ENCODE measurements at regions of chr4 and their contacts with region 1.

Region 1: GRCh38 chr4:107989537-107990386 is at the start of gene HADH:
- DNase-seq: peak; percentile 95
- ATAC-seq: peak; percentile 98
- H3K4me3 ChIP-seq: peak within 1 kb of the TSS; percentile 65 to 87 (median 71)
- H3K4me3 Mint-ChIP-seq: peak within 1 kb of the TSS; percentile 81
- H3K27ac ChIP-seq: peak within 1 kb of the TSS; percentile 38 to 82
- H3K27ac Mint-ChIP-seq: peak within 1 kb of the TSS; percentile 82
- H3K4me1 ChIP-seq: peaks cover 33 to 46% of the 10 kb centered on the region in 2 donors
- H3K4me1 Mint-ChIP-seq: peaks cover 48% of the 10 kb centered on the region
- H3K27me3 ChIP-seq: no peaks in the 10 kb centered on the region
- H3K27me3 Mint-ChIP-seq: no peaks in the 10 kb centered on the region
- CTCF ChIP-seq: no peak
- total RNA-seq, gene HADH: 26.1 and 26.4 TPM in 2 replicates

Region 2: DNA sequence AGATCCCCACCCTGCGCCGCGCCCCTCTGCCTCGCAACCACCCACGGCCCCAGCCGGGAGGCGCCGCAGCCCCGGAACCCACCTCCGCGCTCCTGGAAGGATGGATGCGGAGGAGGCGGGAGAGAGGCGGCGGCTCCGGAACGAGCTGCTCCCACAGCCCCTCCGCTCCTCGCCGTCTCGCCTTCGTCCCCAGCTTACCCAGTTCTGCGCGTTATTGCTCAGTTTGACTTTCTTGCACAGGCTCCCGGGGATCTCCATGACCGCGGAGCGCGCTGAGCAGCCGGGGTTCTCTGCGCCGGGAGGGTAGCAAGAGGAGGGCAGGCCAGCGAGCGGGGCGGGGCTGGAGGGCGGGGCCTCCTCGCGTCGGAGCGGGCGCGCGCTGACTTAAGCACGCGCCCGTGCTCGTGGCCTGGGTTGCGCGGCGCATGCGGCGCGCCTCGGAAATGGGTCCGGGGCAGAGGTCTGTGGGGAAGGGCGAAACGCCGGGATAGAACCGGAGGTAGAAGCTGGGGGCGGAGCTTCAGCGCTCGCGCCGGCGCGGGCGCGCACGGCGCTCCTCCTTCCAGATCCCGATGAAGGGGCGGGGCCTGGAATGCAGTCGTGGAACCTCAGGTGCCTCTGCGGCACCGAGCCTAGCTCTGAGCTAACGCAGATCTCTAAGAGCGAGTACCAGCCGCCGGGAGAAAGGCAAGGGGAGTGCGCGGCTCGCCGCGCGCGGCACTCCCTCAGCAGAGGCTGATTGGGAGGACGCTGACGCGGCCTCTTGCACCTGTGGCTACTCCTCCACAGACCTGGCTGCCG is 269.6 kb before region 1 on chr4 and contains the start of gene PAPSS1:
- CTCF ChIA-PET with region 1: interaction called, 4 read pairs
- POLR2A ChIA-PET with region 1: no interaction called
- intact Hi-C with region 1: loop called (anchors 1 kb)
- DNase-seq: peak; percentile 99
- ATAC-seq: peak; percentile 85
- H3K4me3 ChIP-seq: peak within 1 kb of the TSS; percentile 68 to 93 (median 90)
- H3K4me3 Mint-ChIP-seq: peak within 1 kb of the TSS; percentile 99
- H3K27ac ChIP-seq: peak within 1 kb of the TSS; percentile 50 to 75
- H3K27ac Mint-ChIP-seq: peak within 1 kb of the TSS; percentile 97
- H3K4me1 ChIP-seq: peaks cover 22 to 26% of the 10 kb centered on the region in 2 donors
- H3K4me1 Mint-ChIP-seq: peaks cover 39% of the 10 kb centered on the region
- H3K27me3 ChIP-seq: no peaks in the 10 kb centered on the region
- H3K27me3 Mint-ChIP-seq: no peaks in the 10 kb centered on the region
- CTCF ChIP-seq: no peak
- total RNA-seq, gene PAPSS1: 31.5 and 33.9 TPM in 2 replicates

Region 3: DNA sequence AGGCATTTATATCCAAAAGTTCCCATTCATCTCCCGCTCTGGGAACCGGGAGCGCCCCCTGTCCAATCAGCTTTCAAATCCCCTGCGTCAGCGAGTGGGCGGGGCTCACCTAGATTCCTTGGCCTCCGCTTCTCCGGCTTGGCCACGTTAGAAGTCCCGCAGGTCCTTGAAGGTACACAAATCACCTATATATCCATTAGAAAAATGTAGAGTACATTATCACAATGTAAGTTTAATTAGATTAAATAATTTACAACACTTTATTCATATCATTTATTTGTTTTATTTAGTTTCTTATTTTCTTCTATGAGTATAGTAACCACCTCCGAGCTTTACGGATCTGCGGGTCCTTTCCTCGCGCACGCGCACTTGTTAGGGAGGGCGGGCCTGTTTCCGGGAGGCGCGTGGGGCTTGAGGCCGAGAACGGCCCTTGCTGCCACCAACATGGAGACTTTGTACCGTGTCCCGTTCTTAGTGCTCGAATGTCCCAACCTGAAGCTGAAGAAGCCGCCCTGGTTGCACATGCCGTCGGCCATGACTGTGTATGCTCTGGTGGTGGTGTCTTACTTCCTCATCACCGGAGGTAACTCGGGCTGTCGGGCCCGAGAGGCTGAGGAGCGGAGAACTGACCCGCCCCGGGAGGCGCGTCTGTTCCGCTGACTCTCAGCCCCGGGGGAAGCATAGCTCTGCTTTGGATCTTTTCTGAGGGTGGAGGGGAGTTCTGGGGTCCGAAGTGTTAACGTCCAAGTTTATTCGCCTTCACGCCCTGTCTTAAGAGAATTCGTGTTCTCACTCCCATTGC is 660.7 kb after region 1 on chr4 and contains the start of gene OSTC:
- CTCF ChIA-PET with region 1: no interaction called
- POLR2A ChIA-PET with region 1: interaction called, 3 read pairs
- intact Hi-C with region 1: loop called (anchors 1 kb)
- DNase-seq: peak; percentile 96
- ATAC-seq: peak; percentile 95
- H3K4me3 ChIP-seq: peak within 1 kb of the TSS; percentile 79 to 96 (median 87)
- H3K4me3 Mint-ChIP-seq: peak within 1 kb of the TSS; percentile 95
- H3K27ac ChIP-seq: peak within 1 kb of the TSS; percentile 77 to 91
- H3K27ac Mint-ChIP-seq: peak within 1 kb of the TSS; percentile 96
- H3K4me1 ChIP-seq: peaks cover 9 to 15% of the 10 kb centered on the region in 2 donors
- H3K4me1 Mint-ChIP-seq: peaks cover 37% of the 10 kb centered on the region
- H3K27me3 ChIP-seq: no peaks in the 10 kb centered on the region
- H3K27me3 Mint-ChIP-seq: no peaks in the 10 kb centered on the region
- CTCF ChIP-seq: no peak
- total RNA-seq, gene OSTC: 38.9 and 39.9 TPM in 2 replicates